Activated B cell treated with CpG ODN at 0.5 μM for 24 hours (primary cell): ENCODE measurements at regions of chr1 and their contacts with region 1.

Region 1: DNA sequence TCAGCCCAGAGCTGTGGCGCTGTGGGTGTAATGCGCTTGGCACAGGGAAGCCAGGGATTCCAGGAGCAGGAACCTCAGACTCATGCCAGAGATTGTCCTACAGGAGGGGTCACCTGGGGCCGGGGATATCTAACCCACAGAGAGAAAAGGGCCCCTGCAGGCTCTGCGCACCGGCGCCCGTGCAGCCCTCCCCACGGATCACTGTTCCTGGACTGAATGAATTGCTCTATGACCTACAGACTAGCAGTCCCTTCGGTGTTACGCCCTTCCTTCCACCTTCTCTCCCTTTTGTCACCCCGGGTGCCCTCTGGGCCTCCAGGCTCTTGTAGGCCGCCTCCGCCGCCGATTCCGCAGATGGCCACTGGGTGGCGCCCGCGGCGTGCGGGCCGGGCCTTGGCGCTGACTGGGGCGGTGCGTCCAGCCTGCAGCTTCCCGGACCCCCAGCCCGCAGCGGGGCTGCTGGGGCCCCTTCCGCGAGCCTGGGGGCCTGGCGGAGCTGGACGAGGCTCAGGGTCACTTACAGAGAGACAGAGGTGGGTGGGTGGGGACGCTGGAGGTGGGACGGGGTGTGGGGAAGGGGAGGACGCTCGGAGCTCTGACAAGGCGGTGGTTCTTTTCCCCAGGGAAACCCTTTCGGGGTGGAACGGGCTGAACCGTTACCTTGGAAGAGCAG is 101.3 kb downstream of the IER5 start:
- DNase-seq: peak; percentile 64
- ATAC-seq: peak; percentile 81
- H3K4me3 Mint-ChIP-seq: peak overlapping the region; percentile 29
- H3K27ac Mint-ChIP-seq: no peak overlapping the region
- H3K4me1 Mint-ChIP-seq: peaks cover 4% of the 10 kb centered on the region
- H3K27me3 Mint-ChIP-seq: peaks cover 45% of the 10 kb centered on the region
- CTCF ChIP-seq: no peak

Region 2: DNA sequence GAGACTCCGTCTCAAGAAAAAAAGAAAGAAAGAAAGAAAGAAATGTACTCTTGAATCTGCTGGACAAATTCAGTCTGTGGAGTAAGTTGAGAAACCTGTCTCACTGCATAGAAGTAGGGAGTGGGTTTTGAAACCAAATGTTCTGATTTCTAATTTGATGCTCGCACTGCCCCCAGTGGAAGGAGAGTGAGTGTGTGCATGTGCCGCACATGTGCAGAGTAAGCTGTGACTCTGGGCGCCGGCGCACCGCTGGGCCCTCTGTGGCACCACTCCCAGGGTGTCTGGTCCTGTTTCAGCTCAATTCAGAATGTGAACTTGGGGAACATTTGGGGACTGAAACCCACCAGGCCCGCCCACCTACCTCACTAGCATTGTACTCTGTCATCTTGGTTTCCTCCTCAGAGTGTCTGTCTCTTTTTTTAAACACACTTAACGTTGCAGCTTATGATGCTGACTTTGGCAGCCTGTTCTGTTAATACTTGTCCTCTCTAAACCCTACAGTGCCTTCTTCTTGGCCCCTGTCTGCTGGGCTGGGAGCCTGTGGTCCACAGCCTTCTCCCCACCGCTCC is 398.1 kb after region 1 on chr1:
- CTCF ChIA-PET with region 1: no interaction called
- POLR2A ChIA-PET with region 1: no interaction called
- intact Hi-C with region 1: no loop called
- DNase-seq: no peak
- ATAC-seq: no peak
- H3K4me3 Mint-ChIP-seq: no peak overlapping the region
- H3K27ac Mint-ChIP-seq: no peak overlapping the region
- H3K4me1 Mint-ChIP-seq: no peaks in the 10 kb centered on the region
- H3K27me3 Mint-ChIP-seq: peaks cover 4% of the 10 kb centered on the region
- CTCF ChIP-seq: no peak

Region 3: GRCh38 chr1:181936768-181937581 is 747.1 kb after region 1 on chr1:
- CTCF ChIA-PET with region 1: no interaction called
- POLR2A ChIA-PET with region 1: no interaction called
- intact Hi-C with region 1: loop called (anchors 2 kb)
- DNase-seq: no peak
- ATAC-seq: no peak
- H3K4me3 Mint-ChIP-seq: no peak overlapping the region
- H3K27ac Mint-ChIP-seq: no peak overlapping the region
- H3K4me1 Mint-ChIP-seq: peaks cover 2% of the 10 kb centered on the region
- H3K27me3 Mint-ChIP-seq: peaks cover 4% of the 10 kb centered on the region
- CTCF ChIP-seq: no peak

Region 4: DNA sequence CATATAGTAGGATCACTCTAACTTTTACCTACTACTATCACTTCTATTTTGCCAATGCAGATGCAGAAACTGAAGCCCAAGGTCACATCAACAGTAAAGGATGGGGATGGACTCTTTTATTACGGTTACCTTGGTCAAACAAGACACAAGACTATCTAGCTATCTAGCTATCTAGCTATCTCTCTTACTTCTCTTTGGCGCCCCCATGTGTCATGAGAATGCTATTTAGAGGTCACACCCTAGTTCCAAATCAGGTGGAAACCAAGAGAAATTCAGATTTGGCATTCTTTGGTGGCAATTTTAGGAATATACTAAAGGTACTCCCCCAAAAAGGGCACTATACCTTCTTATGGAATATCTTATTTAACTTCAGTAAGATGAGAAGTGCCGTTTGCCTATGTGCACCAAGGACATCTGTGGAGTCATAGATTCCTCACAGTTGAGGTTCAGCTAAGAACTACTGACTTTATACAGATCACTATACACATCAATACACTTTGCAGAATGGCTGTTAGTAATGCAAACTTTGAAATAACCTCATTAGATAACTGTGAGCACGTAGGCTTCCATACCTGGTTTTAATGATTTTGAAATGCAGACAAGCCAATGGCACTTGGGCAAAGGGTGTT is 865.0 kb after region 1 on chr1:
- CTCF ChIA-PET with region 1: interaction called, 7 read pairs
- POLR2A ChIA-PET with region 1: no interaction called
- intact Hi-C with region 1: loop called (anchors 1 kb)
- DNase-seq: no peak
- ATAC-seq: peak; percentile 56
- H3K4me3 Mint-ChIP-seq: no peak overlapping the region
- H3K27ac Mint-ChIP-seq: no peak overlapping the region
- H3K4me1 Mint-ChIP-seq: no peaks in the 10 kb centered on the region
- H3K27me3 Mint-ChIP-seq: peaks cover 35% of the 10 kb centered on the region
- CTCF ChIP-seq: no peak